ENCODE measurements at regions of chr2 and their contacts with region 1.

Region 1: DNA sequence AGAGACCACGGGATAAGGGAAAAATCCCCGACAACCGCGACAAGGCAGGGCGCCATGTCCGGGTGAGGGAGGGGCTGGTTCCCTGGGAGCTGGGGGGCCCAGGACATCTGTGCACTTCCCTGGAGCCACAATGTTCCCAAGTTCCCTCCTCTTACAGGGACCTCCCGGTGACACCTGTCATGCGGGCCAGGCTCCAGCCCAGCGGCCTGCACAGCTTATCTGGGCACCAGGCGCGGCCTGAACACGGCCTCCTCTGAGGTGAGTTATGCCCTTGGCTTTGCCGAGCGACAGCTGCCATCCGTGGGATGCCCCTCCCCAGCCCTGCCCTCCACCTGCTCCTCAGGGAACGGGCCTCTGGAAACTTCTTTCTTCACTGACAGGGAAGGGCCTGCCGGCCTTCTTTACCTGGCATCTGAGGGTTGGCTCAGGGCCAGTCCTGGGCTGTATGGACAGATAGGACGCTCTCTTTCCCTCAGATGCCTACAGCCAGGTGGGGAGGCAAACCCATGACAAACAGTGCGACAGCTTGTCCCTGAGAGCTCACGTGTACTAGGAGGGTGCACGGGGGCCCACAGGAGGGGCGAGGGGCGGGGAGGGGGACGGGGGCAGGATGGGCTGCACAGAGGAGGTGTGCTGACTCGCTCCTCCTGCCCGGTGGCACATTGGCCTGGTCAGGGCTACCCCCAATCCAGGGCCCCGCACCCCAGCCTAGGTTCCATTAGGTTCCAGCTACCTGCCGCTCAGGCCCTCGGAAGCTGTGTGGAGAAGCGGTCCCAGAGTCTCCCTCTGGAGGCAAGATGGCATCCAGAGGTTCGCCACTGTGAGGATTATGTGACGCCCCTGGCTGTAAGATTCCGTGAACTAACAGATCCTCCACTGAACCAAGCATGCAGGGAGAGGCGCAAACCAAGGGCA is 34.9 kb upstream of the HPCAL1 start:
- DNase-seq: no peak
- ATAC-seq: no peak
- H3K4me3 ChIP-seq: no peak overlapping the region
- H3K4me3 Mint-ChIP-seq: no peak overlapping the region
- H3K27ac ChIP-seq: no peak overlapping the region
- H3K27ac Mint-ChIP-seq: no peak overlapping the region
- H3K4me1 ChIP-seq: peaks cover 0 to 8% of the 10 kb centered on the region in 2 donors
- H3K4me1 Mint-ChIP-seq: peaks cover 5 to 13% (median 11%) of the 10 kb centered on the region in 7 donors
- H3K27me3 ChIP-seq: no peaks in the 10 kb centered on the region
- H3K27me3 Mint-ChIP-seq: no peaks in the 10 kb centered on the region

Region 2: GRCh38 chr2:8378016-8378810 is 1889.6 kb before region 1 on chr2:
- CTCF ChIA-PET with region 1: no interaction called
- POLR2A ChIA-PET with region 1: no interaction called
- intact Hi-C with region 1: no loop called
- DNase-seq: no peak
- ATAC-seq: no peak
- H3K4me3 ChIP-seq: no peak overlapping the region
- H3K4me3 Mint-ChIP-seq: no peak overlapping the region
- H3K27ac ChIP-seq: no peak overlapping the region
- H3K27ac Mint-ChIP-seq: no peak overlapping the region
- H3K4me1 ChIP-seq: no peaks in the 10 kb centered on the region
- H3K4me1 Mint-ChIP-seq: peaks cover 0 to 26% (median 5%) of the 10 kb centered on the region in 7 donors
- H3K27me3 ChIP-seq: no peaks in the 10 kb centered on the region
- H3K27me3 Mint-ChIP-seq: peaks cover 0 to 11% (median 9%) of the 10 kb centered on the region in 5 donors

Region 3: GRCh38 chr2:9984217-9984739 is 283.5 kb before region 1 on chr2:
- CTCF ChIA-PET with region 1: no interaction called
- POLR2A ChIA-PET with region 1: no interaction called
- intact Hi-C with region 1: loop called in 1 of 2 experiments (anchors 5 kb)
- DNase-seq: peak in 6 of 9 donors; percentile 18 to 63 (median 52)
- ATAC-seq: peak; percentile 94
- H3K4me3 ChIP-seq: no peak overlapping the region
- H3K4me3 Mint-ChIP-seq: no peak overlapping the region
- H3K27ac ChIP-seq: no peak overlapping the region
- H3K27ac Mint-ChIP-seq: peak overlapping the region in 1 of 9 donors; percentile 55
- H3K4me1 ChIP-seq: no peaks in the 10 kb centered on the region
- H3K4me1 Mint-ChIP-seq: peaks cover 9 to 18% (median 14%) of the 10 kb centered on the region in 7 donors
- H3K27me3 ChIP-seq: no peaks in the 10 kb centered on the region
- H3K27me3 Mint-ChIP-seq: peaks cover 0 to 21% (median 5%) of the 10 kb centered on the region in 5 donors

Region 4: DNA sequence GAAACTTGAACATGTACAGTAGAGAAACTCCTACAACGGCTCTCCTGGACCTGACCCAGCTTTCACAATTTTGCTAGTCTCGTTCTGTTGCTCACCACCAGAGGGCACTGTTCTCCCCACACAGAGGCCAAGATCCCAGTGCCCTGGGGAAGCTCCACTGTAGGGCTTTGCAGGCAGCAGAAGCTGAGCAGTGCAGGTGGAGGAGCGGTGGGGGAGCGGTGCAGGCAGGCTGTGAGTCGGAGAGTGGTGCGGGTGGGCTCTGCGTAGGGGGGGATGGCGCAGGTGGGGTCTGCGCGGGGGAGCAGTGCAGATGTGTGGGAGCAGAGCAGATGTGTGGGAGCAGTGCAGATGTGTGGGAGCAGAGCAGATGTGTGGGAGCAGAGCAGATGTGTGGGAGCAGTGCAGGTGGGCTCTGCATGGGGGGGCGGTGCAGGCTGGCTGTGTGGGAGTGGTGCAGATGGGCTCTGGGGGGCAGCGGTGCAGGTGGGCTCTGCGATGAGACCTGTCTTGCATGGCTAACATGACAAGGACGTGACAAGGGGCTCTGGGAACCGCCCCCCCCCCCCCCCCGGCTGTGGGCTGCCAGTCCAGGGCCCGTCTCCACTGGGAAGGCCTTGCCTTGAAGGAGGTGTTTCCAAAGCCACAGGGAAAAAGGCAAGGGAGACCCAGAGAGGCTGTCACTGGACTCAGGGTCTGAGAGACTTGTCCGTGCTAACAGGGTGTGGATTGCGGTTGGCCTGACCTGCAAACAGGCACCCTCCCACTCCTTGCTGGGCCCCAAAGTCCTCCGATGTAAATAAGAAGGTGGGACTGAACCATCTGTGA is 194.9 kb before region 1 on chr2:
- CTCF ChIA-PET with region 1: no interaction called
- POLR2A ChIA-PET with region 1: no interaction called
- intact Hi-C with region 1: loop called in 1 of 2 experiments (anchors 1 kb)
- DNase-seq: peak; percentile 54 to 82 (median 77)
- ATAC-seq: peak; percentile 97
- H3K4me3 ChIP-seq: no peak overlapping the region
- H3K4me3 Mint-ChIP-seq: peak overlapping the region in 1 of 10 donors; percentile 0
- H3K27ac ChIP-seq: no peak overlapping the region
- H3K27ac Mint-ChIP-seq: no peak overlapping the region
- H3K4me1 ChIP-seq: no peaks in the 10 kb centered on the region
- H3K4me1 Mint-ChIP-seq: peaks cover 0 to 6% (median 3%) of the 10 kb centered on the region in 7 donors
- H3K27me3 ChIP-seq: peaks cover 0 to 3% of the 10 kb centered on the region in 2 donors
- H3K27me3 Mint-ChIP-seq: peaks cover 43 to 53% (median 50%) of the 10 kb centered on the region in 5 donors

Region 5: DNA sequence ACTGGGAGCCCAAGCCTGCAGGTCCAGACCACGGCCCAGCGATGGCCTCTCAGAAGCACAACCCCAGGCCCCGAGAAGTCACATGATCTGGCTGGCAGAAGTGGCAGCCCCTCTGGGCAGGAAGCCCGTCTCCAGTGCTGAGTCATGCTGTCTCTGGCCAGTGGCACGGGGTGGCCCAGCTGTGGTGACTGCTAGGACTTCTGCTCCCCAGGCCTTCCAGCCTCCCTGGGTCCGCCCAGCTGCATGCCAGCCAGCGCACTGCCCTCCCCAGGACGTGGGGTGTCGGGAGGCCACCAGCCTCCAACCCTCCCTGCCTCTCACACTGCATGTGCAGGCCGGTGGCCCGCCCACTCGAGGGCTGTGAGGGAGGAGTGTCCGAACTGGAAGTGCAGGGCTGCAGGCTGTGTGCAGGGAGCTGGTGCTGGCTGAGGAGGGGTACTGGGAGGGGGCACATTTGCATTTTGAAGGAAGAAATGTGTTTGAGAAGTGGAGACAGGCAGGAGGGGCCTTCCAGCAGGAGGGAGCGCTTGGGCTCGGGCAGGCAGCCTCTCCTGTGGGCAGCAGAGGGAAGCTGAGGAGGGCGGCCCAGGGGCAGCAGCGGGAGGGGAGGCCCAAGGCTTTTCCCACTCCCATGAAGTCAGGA is 17.9 kb after region 1 on chr2:
- CTCF ChIA-PET with region 1: no interaction called
- POLR2A ChIA-PET with region 1: no interaction called
- intact Hi-C with region 1: no loop called
- DNase-seq: no peak
- ATAC-seq: peak; percentile 72
- H3K4me3 ChIP-seq: no peak overlapping the region
- H3K4me3 Mint-ChIP-seq: no peak overlapping the region
- H3K27ac ChIP-seq: no peak overlapping the region
- H3K27ac Mint-ChIP-seq: no peak overlapping the region
- H3K4me1 ChIP-seq: no peaks in the 10 kb centered on the region
- H3K4me1 Mint-ChIP-seq: peaks cover 0 to 15% (median 3%) of the 10 kb centered on the region in 7 donors
- H3K27me3 ChIP-seq: no peaks in the 10 kb centered on the region
- H3K27me3 Mint-ChIP-seq: peaks cover 0 to 3% (median 0%) of the 10 kb centered on the region in 5 donors

Region 6: GRCh38 chr2:10331027-10331701 is 63.4 kb after region 1 on chr2:
- CTCF ChIA-PET with region 1: interaction called, 8 read pairs
- POLR2A ChIA-PET with region 1: interaction called, 3 read pairs
- intact Hi-C with region 1: loop called in 1 of 2 experiments (anchors 1 kb)
- DNase-seq: peak; percentile 41 to 79 (median 70)
- ATAC-seq: peak; percentile 58
- H3K4me3 ChIP-seq: peak overlapping the region; percentile 80
- H3K4me3 Mint-ChIP-seq: peak overlapping the region; percentile 85 to 97 (median 94)
- H3K27ac ChIP-seq: peak overlapping the region; percentile 82
- H3K27ac Mint-ChIP-seq: peak overlapping the region; percentile 92 to 99 (median 98)
- H3K4me1 ChIP-seq: peaks cover 32 to 65% of the 10 kb centered on the region in 2 donors
- H3K4me1 Mint-ChIP-seq: peaks cover 58 to 96% (median 93%) of the 10 kb centered on the region in 7 donors
- H3K27me3 ChIP-seq: no peaks in the 10 kb centered on the region
- H3K27me3 Mint-ChIP-seq: no peaks in the 10 kb centered on the region

Region 7: DNA sequence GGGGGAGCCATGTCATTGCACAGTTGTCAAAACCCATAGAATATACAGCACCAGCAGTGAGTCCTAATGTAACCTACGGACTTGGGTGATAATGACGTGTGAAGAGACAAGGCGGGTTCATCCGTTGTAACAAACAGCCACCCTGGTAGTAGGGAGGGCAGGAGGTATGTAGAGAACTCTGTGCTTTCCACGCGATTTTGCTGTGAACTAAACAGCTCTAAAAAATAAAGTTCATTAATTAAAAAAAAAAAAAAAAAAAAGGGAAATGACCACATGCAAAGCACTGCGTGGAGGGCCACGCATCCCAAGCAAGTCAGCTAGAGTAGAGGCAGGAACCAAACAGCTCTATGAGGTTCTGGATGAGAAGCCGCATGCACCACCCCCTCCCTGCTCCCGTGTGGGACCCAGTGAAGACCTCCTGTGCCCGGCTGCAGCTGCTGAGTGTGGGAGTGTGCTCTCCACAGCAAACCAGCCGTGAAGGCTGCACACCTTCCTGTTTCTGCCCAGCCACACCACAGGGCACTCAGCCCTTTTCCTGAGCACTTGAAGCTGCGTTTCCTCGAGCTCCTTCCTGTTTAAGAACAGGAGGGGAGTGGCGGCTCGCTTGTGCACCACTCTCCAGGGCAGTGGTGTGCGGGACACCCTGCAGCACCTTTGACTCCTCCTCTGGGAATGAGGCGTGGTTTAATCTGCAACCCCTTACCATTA is 114.7 kb after region 1 on chr2:
- CTCF ChIA-PET with region 1: no interaction called
- POLR2A ChIA-PET with region 1: no interaction called
- intact Hi-C with region 1: loop called in 1 of 2 experiments (anchors 1 kb)
- DNase-seq: peak in 7 of 9 donors; percentile 59 to 81 (median 73)
- ATAC-seq: peak; percentile 91
- H3K4me3 ChIP-seq: peak overlapping the region; percentile 57
- H3K4me3 Mint-ChIP-seq: peak overlapping the region; percentile 46 to 86 (median 81)
- H3K27ac ChIP-seq: peak overlapping the region; percentile 64
- H3K27ac Mint-ChIP-seq: peak overlapping the region in 8 of 9 donors; percentile 66 to 96 (median 91)
- H3K4me1 ChIP-seq: peaks cover 57 to 90% of the 10 kb centered on the region in 2 donors
- H3K4me1 Mint-ChIP-seq: peaks cover 70 to 96% (median 93%) of the 10 kb centered on the region in 7 donors
- H3K27me3 ChIP-seq: no peaks in the 10 kb centered on the region
- H3K27me3 Mint-ChIP-seq: no peaks in the 10 kb centered on the region

Region 8: GRCh38 chr2:10434886-10435819 is 167.3 kb after region 1 on chr2:
- CTCF ChIA-PET with region 1: interaction called, 20 read pairs
- POLR2A ChIA-PET with region 1: no interaction called
- intact Hi-C with region 1: loop called (anchors 1 kb)
- DNase-seq: peak; percentile 31 to 84 (median 64)
- ATAC-seq: peak; percentile 74
- H3K4me3 ChIP-seq: no peak overlapping the region
- H3K4me3 Mint-ChIP-seq: peak overlapping the region in 1 of 10 donors; percentile 27
- H3K27ac ChIP-seq: no peak overlapping the region
- H3K27ac Mint-ChIP-seq: peak overlapping the region in 2 of 9 donors; percentile 14 to 72
- H3K4me1 ChIP-seq: peaks cover 0 to 5% of the 10 kb centered on the region in 2 donors
- H3K4me1 Mint-ChIP-seq: peaks cover 0 to 20% (median 12%) of the 10 kb centered on the region in 7 donors
- H3K27me3 ChIP-seq: peaks cover 0 to 2% of the 10 kb centered on the region in 2 donors
- H3K27me3 Mint-ChIP-seq: peaks cover 0 to 6% (median 2%) of the 10 kb centered on the region in 5 donors

Region 9: DNA sequence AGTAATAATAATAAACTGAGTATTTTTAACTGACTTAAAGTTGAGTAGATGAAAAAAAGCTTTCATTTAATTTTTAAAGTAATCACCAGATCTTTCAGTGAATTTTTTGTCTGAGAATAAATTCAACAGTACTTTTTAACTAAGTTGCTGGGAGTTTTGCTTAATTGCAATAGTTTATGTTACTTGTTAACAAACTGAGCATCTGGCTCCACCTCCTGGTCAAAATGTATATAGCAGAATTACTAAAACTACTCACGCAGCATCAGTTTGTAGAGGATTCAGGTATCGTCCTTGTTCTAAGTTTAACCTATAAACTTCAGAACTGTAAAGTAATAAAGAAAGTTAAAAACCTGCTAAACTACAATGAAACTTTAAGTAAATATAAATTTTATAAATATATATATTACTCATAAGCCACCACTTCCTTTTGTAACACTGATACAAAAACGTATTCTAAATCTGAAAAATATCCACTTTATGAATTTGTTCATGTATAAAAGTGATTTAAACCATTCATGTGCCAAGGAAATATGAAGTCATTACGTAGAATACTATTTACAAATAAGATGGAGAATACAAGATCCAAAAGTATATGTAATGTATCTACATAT is 400.7 kb after region 1 on chr2:
- CTCF ChIA-PET with region 1: no interaction called
- POLR2A ChIA-PET with region 1: no interaction called
- intact Hi-C with region 1: loop called in 1 of 2 experiments (anchors 1 kb)
- DNase-seq: peak in 7 of 9 donors; percentile 39 to 63 (median 56)
- ATAC-seq: peak; percentile 71
- H3K4me3 ChIP-seq: no peak overlapping the region
- H3K4me3 Mint-ChIP-seq: no peak overlapping the region
- H3K27ac ChIP-seq: no peak overlapping the region
- H3K27ac Mint-ChIP-seq: no peak overlapping the region
- H3K4me1 ChIP-seq: no peaks in the 10 kb centered on the region
- H3K4me1 Mint-ChIP-seq: peaks cover 0 to 6% (median 0%) of the 10 kb centered on the region in 7 donors
- H3K27me3 ChIP-seq: no peaks in the 10 kb centered on the region
- H3K27me3 Mint-ChIP-seq: no peaks in the 10 kb centered on the region